ENCODE measurements at regions of chr1 and their contacts with region 1.

Region 1: GRCh38 chr1:230797942-230798418 is 50.8 kb downstream of the CAPN9 start:
- DNase-seq: peak; percentile 61 to 79 (median 72)
- ATAC-seq: peak; percentile 84
- H3K4me3 ChIP-seq: no peak overlapping the region
- H3K27ac ChIP-seq: no peak overlapping the region
- H3K4me1 ChIP-seq: no peaks in the 10 kb centered on the region
- H3K27me3 ChIP-seq: no peaks in the 10 kb centered on the region
- CTCF ChIP-seq: peak; percentile 39 to 82 (median 71)
- POLR2A ChIP-seq: no peak

Region 2: DNA sequence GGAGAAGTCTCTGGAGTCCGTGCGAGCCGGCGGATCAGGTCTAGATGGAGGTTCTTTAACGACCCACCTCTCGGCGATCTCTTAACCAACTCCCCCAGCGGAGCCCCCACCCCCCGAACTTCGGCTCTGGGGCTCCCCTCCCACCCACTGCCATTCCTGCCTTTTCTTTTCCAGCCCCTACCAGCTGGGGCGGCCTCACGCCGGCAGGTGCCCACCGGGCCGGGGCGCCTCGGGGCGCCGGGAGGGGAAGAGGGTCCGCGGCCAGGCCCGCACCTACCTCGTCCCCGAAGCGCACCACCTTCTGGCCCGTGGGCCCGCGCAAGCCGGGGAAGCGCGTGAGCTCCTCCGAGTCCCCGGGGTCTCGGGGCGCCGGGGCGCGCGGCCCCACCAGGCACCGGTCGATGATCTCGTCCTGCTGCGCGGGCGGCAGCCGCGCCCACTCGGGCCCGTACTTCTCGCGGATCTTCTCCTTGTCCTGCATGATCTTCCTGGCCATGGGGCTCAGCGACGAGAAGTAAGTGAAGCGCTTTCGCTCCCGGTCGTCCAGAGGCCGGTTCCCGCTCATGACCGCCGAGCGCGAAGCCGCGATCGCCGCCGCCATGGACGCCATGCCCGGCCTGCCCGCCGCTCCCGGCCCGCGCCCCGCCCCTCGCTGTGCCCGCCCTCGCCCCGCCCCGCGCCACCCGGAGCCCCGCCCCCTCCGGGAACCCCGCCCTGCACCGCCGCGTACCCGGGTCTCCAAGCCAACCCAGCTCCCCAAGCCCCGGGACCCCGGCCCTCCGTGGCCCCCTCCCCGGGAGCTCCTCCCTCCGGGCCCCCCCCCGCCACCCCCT is 70.1 kb after region 1 on chr1 and contains the start of gene C1orf198:
- intact Hi-C with region 1: no loop called
- DNase-seq: peak; percentile 68 to 83 (median 82)
- ATAC-seq: peak; percentile 88
- H3K4me3 ChIP-seq: peak within 1 kb of the TSS; percentile 92 to 96
- H3K27ac ChIP-seq: peak within 1 kb of the TSS; percentile 94 to 97 (median 95)
- H3K4me1 ChIP-seq: peaks cover 60% of the 10 kb centered on the region
- H3K27me3 ChIP-seq: no peaks in the 10 kb centered on the region
- CTCF ChIP-seq: no peak
- POLR2A ChIP-seq: peak; percentile 70 to 83 (median 76)
- total RNA-seq, gene C1orf198: 29.0 to 66.7 TPM

Region 3: DNA sequence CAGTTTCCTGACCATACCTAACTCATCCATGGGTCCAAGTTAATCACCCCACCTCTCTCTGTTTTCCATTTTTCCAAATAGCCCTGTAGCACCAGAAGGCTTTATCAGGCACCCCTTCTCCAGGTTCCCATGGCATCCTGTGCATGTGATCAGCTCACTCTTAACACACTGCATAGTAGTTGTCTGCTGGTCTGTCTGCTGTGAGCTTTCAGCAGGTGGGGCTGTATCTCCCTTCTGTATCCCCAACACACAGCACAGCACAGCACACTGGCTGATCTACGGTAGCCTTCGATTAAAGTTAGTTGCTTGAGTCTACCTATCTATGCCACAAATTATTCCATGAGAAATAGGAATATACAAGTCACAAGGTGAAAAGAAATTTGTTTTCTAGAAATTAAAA is 124.6 kb after region 1 on chr1:
- intact Hi-C with region 1: loop called (anchors 5 kb)
- DNase-seq: no peak
- ATAC-seq: no peak
- H3K4me3 ChIP-seq: no peak overlapping the region
- H3K27ac ChIP-seq: no peak overlapping the region
- H3K4me1 ChIP-seq: no peaks in the 10 kb centered on the region
- H3K27me3 ChIP-seq: no peaks in the 10 kb centered on the region
- CTCF ChIP-seq: no peak
- POLR2A ChIP-seq: no peak

Region 4: DNA sequence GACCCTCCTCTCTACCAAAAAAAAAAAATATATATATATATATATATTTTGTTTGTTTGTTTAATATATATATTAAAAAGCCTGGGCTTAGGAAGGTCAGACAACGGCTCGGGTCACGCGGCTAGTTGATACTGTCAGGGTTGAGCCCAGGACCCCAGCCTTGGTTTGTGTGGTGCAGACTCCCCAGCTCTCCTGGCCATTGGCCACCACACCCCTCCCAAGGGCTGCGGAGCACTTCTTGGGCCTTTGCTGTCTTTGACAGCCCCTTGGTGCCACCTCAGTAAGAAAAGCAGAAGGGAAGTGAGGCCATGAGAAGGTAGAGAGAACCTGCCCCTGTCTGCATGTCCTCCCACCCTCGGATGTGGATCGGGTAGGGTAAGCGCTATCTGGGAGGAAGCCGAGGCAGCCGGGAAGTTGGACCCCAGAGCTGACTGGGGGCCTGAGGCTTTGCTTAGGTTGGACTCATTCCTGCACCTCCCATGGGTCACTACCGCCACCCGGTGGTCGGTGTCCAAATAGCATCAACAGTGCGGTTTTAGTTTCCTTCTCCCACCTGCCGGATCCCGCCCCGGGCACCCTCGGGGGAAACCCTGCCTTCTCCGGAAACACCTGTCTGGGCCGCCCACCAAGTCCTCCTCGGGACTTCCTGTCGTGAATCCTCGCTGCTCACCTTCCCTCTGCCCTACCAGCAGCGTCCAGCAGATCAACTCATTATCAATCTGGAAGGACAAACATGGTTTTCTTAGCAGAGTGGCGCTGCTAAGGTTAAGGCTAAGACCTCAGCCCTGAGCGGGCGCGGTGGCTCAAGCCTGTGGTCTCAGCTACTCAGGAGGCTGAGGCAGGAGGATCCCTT is 413.3 kb after region 1 on chr1:
- intact Hi-C with region 1: loop called (anchors 5 kb)
- DNase-seq: peak; percentile 84 to 89 (median 88)
- ATAC-seq: peak; percentile 94
- H3K4me3 ChIP-seq: no peak overlapping the region
- H3K27ac ChIP-seq: peak overlapping the region in 3 of 4 donors; percentile 14 to 53 (median 37)
- H3K4me1 ChIP-seq: peaks cover 11% of the 10 kb centered on the region
- H3K27me3 ChIP-seq: no peaks in the 10 kb centered on the region
- CTCF ChIP-seq: peak; percentile 70 to 97 (median 95)
- POLR2A ChIP-seq: no peak